Mucosa of descending colon (tissue), 3 donors: ENCODE measurements at regions of chr17 and their contacts with region 1.

Region 1: GRCh38 chr17:1270210-1271010 is at the start of gene BHLHA9:
- DNase-seq: peak; percentile 48 to 63 (median 57)
- ATAC-seq: peak; percentile 7
- H3K4me3 ChIP-seq: no peak within 1 kb of the TSS
- H3K4me1 ChIP-seq: peaks cover 4% of the 10 kb centered on the region
- CTCF ChIP-seq: no peak
- total RNA-seq, gene BHLHA9: not detected

Region 2: GRCh38 chr17:1164935-1165556 is 105.4 kb before region 1 on chr17:
- intact Hi-C with region 1: no loop called
- DNase-seq: no peak
- ATAC-seq: peak; percentile 30
- H3K4me3 ChIP-seq: no peak overlapping the region
- H3K4me1 ChIP-seq: no peaks in the 10 kb centered on the region
- CTCF ChIP-seq: no peak

Region 3: GRCh38 chr17:1331708-1332107 is 61.3 kb after region 1 on chr17:
- intact Hi-C with region 1: loop called in 1 of 2 experiments (anchors 5 kb)
- DNase-seq: no peak
- ATAC-seq: no peak
- H3K4me3 ChIP-seq: no peak overlapping the region
- H3K4me1 ChIP-seq: peaks cover 6% of the 10 kb centered on the region
- CTCF ChIP-seq: no peak